SK-N-SH (cell line): ENCODE measurements at regions of chr6 and their contacts with region 1.

Region 1: GRCh38 chr6:51844336-51844735 is 243.1 kb downstream of the PKHD1 start:
- DNase-seq: peak; percentile 55
- H3K4me3 ChIP-seq: no peak overlapping the region
- H3K27ac ChIP-seq: peak overlapping the region in 1 of 2 experiments; percentile 95; a peak in 2 of 4 replicates
- H3K4me1 ChIP-seq: peaks cover 0 to 34% of the 10 kb centered on the region in 2 experiments; a peak in 2 of 4 replicates
- H3K27me3 ChIP-seq: no peaks in the 10 kb centered on the region
- CTCF ChIP-seq: no peak
- EP300 ChIP-seq: no peak
- RAD21 ChIP-seq: peak; percentile 85

Region 2: DNA sequence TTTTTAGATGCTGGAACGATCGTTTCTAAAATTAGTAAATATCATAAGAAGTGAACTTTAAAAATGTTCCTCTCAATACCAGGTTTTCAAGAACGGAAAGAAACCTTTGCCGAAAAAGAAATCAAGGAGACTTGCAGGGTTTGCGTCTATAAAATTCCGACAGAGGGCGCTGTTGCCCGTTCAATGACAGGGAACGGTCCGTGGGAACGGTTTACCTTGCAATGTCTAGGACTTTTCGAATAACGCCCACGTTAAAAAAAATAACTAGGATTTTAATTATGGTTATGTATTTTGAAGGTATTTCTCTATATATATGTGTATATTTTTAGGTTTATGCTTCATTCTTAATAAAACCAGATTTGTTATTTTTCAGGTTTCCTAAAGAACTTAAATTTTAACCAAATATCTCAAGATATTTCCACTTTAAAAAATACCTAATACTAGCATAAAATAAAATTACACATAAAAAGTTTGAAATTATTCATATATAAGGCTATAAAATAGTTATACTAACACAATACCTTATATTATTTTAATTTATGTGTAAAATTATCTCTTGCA is 1028.1 kb before region 1 on chr6:
- CTCF ChIA-PET with region 1: interaction called, 11 read pairs
- POLR2A ChIA-PET with region 1: interaction called, 5 read pairs
- DNase-seq: peak; percentile 63
- H3K4me3 ChIP-seq: peak overlapping the region; percentile 63
- H3K27ac ChIP-seq: peak overlapping the region in 1 of 2 experiments; percentile 99; a peak in 2 of 4 replicates
- H3K4me1 ChIP-seq: peaks cover 0 to 3% of the 10 kb centered on the region in 2 experiments; a peak in 1 of 4 replicates
- H3K27me3 ChIP-seq: peaks cover 38% of the 10 kb centered on the region
- CTCF ChIP-seq: peak; percentile 93
- EP300 ChIP-seq: no peak
- RAD21 ChIP-seq: peak; percentile 96

Region 3: DNA sequence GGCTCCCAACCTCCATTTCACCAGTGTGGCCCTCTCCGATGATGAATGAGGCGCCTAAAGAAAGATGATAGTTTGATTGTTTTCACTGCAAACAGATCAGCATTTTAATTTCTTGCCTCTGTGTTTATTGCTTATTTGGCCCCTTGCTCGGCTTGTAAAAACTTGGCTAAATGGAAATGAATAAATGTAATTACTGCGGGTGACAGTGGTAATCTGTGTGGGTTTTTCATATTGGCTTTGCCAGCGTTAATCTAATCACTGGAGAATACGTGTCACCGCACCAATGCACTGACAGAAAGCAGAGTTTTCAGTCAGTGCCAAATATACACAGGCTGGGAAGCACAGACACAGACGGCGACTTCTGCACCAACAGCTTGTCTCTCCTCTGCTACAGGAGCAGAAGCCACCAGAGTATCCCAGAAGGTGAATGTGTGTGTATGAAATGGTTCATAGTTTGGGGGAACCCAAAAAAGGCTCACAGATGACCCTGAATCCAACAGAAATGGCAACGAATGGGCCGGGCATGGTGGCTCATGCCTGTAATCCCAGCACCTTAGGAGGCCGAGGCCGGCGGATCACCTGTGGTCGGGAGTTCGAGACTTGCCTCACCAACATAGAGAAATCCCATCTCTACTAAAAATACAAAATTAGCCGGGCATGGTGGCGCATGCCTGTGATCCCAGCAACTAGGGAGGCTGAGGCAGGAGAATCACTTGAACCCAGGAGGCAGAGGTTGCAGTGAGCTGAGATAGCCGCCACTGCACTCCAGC is 290.9 kb before region 1 on chr6:
- CTCF ChIA-PET with region 1: interaction called, 10 read pairs
- POLR2A ChIA-PET with region 1: interaction called, 11 read pairs
- DNase-seq: peak; percentile 44
- H3K4me3 ChIP-seq: no peak overlapping the region
- H3K27ac ChIP-seq: peak overlapping the region in 1 of 2 experiments; percentile 99; a peak in 2 of 4 replicates
- H3K4me1 ChIP-seq: peaks cover 0 to 31% of the 10 kb centered on the region in 2 experiments; a peak in 2 of 4 replicates
- H3K27me3 ChIP-seq: no peaks in the 10 kb centered on the region
- CTCF ChIP-seq: no peak
- EP300 ChIP-seq: peak in 1 of 2 experiments; percentile 98; a peak in 2 of 4 replicates
- RAD21 ChIP-seq: peak; percentile 42

Region 4: DNA sequence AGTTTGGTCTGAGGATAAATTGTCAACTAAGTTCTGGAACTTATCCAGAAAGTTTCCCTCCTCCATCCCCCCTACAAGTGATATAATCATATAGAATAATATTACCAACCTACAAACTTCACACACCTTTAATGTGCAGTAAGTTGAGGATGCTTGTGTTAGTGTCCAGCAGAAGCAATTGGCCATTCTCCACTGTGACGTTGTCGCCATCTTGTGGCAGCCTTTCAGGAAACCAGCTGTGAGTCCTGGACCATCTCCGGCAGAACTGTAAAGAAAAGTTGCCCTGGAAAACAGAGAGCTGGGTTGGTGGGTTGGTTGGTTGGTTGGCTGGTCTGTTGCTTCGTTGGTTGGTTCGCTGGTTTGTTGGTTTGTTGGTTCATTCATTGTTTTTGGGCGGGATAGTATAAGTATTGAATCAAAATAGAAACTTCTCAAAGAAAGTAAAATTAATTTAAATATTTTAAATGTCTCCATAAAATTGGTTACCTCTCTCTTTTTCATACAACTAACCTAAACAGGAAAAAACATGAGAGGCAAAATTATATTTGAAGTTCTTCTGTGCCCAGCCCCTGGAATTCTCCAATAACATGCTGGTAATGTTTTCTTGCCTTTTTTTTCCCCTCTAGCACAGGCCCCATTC is 115.5 kb after region 1 on chr6:
- CTCF ChIA-PET with region 1: interaction called, 10 read pairs
- POLR2A ChIA-PET with region 1: no interaction called
- DNase-seq: peak; percentile 34
- H3K4me3 ChIP-seq: no peak overlapping the region; a peak in 1 of 4 replicates
- H3K27ac ChIP-seq: peak overlapping the region in 1 of 2 experiments; percentile 91; a peak in 2 of 4 replicates
- H3K4me1 ChIP-seq: peaks cover 0 to 2% of the 10 kb centered on the region in 2 experiments; a peak in 1 of 4 replicates
- H3K27me3 ChIP-seq: no peaks in the 10 kb centered on the region
- CTCF ChIP-seq: peak; percentile 83
- EP300 ChIP-seq: no peak
- RAD21 ChIP-seq: peak; percentile 99

Region 5: GRCh38 chr6:52020945-52021570 is 176.7 kb after region 1 on chr6:
- CTCF ChIA-PET with region 1: interaction called, 22 read pairs
- POLR2A ChIA-PET with region 1: no interaction called
- DNase-seq: peak; percentile 14
- H3K4me3 ChIP-seq: no peak overlapping the region; a peak in 1 of 4 replicates
- H3K27ac ChIP-seq: peak overlapping the region in 1 of 2 experiments; percentile 99; a peak in 2 of 4 replicates
- H3K4me1 ChIP-seq: peaks cover 0 to 31% of the 10 kb centered on the region in 2 experiments; a peak in 2 of 4 replicates
- H3K27me3 ChIP-seq: no peaks in the 10 kb centered on the region; the same call in 1 of the 2 replicates
- CTCF ChIP-seq: peak; percentile 87
- EP300 ChIP-seq: no peak
- RAD21 ChIP-seq: peak; percentile 91